Activated naive CD4-positive, alpha-beta T cell treated with anti-CD3 and anti-CD28 coated beads for 36 hours (primary cell): ENCODE measurements at regions of chr12 and their contacts with region 1.

Region 1: GRCh38 chr12:102095675-102096263 is 24.1 kb downstream of the NUP37 start:
- DNase-seq: no peak
- H3K4me3 Mint-ChIP-seq: no peak overlapping the region
- H3K27ac Mint-ChIP-seq: no peak overlapping the region
- H3K4me1 Mint-ChIP-seq: no peaks in the 10 kb centered on the region
- H3K27me3 Mint-ChIP-seq: no peaks in the 10 kb centered on the region

Region 2: DNA sequence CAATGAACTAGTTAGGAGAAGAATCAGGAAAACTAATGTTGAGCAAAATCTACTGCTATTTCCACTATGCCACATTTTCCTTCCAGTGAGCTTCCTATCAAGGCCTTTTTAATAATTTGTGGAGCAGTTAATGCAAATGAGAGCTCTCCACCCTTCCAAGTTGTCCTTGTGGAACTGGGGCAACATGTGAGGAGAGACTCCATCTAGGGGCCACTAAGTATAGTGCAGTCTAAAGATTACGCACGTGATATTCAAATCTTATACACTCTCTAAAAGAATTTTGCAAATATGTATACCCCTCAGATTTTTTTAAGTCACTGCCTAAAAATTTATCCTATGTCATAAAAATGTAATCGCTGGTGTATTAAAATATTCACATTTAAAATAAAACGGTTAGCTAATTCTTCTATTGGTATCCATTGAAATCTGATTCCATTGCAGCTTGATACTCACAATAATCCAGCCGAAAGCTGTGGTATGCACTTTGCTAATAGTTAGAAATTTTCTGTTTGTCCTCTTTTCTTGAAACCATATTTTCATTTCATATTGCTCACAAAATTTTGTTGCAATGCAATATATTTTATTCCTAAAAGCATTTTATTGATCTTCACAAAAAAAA is 721.2 kb after region 1 on chr12:
- CTCF ChIA-PET with region 1: no interaction called
- intact Hi-C with region 1: loop called (anchors 10 kb)
- DNase-seq: no peak
- H3K4me3 Mint-ChIP-seq: no peak overlapping the region
- H3K27ac Mint-ChIP-seq: no peak overlapping the region
- H3K4me1 Mint-ChIP-seq: no peaks in the 10 kb centered on the region
- H3K27me3 Mint-ChIP-seq: peaks cover 29% of the 10 kb centered on the region